Calu3 (cell line): ENCODE measurements at regions of chr12 and their contacts with region 1.

Region 1: DNA sequence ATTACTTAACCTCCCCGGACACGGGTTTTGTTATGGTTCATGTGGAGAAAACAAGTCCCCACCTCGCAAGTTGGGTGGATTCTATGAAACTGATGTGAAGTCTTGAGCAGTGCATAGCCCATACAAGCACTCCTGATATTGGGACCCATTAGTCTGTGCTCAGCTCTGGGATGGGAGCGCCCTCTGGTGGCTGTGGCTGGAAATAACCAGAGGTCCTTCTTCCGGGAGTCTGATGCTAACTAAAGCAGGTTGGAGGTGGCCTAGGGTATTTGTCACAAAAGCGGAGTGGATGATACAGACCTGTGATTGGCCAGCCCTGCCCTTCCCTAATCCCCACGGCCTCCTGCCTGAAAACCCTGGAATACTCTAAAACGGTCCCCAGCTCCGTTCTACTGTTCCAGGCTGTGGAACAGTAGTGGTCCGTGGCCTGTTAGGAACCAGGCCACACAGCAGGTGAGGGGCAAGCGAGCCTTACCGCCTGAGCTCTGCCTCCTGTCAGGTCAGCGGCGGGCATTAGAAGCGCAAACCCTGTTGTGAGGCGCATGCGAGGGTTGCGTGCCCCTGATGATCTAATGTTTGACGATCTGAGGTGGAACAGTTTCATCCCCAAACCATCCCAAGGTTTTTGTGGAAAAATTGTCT is 6.4 kb downstream of the SLC48A1 start:
- DNase-seq: peak; percentile 86
- H3K4me3 Mint-ChIP-seq: no peak overlapping the region
- H3K27ac Mint-ChIP-seq: no peak overlapping the region
- H3K4me1 Mint-ChIP-seq: no peaks in the 10 kb centered on the region
- H3K27me3 Mint-ChIP-seq: no peaks in the 10 kb centered on the region
- CTCF ChIP-seq: peak; percentile 74

Region 2: GRCh38 chr12:47715393-47715876 is 64.0 kb before region 1 on chr12:
- CTCF ChIA-PET with region 1: no interaction called
- intact Hi-C with region 1: loop called (anchors 1 kb)
- DNase-seq: peak; percentile 61
- H3K4me3 Mint-ChIP-seq: no peak overlapping the region
- H3K27ac Mint-ChIP-seq: no peak overlapping the region
- H3K4me1 Mint-ChIP-seq: no peaks in the 10 kb centered on the region
- H3K27me3 Mint-ChIP-seq: no peaks in the 10 kb centered on the region
- CTCF ChIP-seq: peak; percentile 77